Posterior vena cava (tissue), 2 donors: ENCODE measurements at regions of chr16 and their contacts with region 1.

Region 1: DNA sequence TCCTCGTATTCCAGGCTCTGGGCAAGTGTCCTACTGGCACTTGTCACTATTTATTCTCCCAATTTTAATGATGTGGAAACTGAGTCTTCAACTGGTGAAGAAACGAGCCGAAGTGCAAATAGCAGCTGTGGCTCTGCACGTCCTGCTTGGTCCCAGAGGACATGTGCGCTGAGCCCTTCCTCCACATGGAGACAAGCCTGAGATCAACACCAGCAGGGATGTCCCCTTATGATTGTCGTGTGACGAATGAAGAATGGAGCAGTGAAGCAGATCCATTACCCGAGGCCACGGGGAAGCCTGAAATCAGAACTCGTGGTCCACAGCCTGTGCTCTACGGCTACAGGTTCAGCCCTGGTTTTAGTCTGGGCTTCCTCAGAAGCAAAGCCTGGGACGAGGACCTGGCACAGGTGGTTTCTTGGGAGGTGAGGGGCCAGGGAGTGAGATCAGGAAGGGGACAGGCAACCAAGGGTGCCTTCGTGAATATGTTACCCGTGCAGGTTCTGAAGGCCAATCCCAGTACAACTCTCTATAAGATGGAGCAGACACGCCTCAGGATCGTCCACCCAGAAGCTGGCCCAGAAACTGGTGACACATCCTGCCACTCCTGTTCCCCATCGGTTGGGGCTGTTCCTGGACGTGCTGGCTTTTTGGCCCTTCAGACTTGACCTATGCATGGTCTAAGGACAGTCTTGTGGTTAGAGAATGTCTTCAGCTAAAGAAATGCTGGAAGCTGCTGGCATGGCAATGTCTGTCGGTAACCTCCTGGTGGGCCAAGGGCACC is 61.2 kb downstream of the FOXL1 start:
- DNase-seq: peak; percentile 46

Region 2: GRCh38 chr16:86611525-86611855 is 28.1 kb before region 1 on chr16:
- intact Hi-C with region 1: loop called in 1 of 2 experiments (anchors 1 kb)
- DNase-seq: no peak

Region 3: DNA sequence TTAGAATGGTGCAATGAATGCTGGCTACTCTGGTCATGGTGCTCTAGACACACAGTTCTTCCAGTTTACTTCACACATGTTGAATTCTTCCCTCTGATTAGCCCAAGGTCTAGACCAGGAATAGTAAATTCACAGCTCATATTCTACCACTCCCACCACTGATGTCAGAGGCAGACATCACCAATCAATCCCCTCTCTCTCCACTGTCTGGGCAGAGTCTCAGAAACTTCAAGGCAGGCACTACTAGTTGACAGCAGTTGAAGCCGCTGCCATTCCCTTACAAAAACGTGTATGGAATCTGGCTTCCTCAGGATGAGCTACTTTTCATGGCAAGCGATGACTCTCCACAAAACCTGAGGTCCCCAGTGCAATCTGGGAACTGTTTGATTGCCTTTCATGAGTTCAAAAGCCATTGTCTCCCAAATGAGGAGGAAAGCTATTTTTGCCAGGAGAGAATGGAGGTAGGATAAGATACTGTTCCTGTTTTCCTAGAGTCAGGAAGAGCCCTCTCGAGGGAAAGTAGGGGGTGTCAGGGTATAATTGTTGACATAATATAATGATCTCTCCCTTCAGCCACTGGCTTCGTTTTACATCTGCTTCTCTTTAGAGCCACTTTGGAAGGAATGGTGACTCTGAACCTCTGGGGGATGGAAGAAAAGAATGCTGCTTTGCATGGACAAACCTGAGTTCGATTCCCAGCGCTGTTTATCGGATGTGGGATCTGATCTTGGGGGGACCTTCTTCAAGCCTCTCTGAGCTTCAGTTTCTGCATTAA is 28.8 kb after region 1 on chr16:
- intact Hi-C with region 1: no loop called
- DNase-seq: no peak